Posterior vena cava (tissue), 2 donors: ENCODE measurements at regions of chr3 and their contacts with region 1.

Region 1: DNA sequence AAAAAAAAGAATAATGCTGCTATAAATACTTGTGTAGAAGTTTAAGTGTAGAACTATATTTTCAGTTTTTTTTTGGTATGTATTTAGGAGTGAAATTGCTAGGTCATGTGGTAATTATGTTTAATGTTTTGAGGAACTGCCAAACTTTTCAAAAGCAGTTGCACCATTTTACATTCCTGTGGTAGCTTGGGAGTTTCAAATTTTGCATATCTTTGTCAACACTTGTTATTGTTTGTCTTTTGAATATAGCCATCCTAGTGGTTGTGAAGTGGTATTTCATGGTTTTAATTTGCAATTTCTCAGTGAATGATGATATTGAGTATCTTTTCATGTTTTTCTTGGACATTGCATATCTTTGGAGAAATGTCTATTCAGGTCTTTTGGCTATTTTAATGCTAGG is 30.4 kb downstream of the SKIL start:
- DNase-seq: no peak

Region 2: DNA sequence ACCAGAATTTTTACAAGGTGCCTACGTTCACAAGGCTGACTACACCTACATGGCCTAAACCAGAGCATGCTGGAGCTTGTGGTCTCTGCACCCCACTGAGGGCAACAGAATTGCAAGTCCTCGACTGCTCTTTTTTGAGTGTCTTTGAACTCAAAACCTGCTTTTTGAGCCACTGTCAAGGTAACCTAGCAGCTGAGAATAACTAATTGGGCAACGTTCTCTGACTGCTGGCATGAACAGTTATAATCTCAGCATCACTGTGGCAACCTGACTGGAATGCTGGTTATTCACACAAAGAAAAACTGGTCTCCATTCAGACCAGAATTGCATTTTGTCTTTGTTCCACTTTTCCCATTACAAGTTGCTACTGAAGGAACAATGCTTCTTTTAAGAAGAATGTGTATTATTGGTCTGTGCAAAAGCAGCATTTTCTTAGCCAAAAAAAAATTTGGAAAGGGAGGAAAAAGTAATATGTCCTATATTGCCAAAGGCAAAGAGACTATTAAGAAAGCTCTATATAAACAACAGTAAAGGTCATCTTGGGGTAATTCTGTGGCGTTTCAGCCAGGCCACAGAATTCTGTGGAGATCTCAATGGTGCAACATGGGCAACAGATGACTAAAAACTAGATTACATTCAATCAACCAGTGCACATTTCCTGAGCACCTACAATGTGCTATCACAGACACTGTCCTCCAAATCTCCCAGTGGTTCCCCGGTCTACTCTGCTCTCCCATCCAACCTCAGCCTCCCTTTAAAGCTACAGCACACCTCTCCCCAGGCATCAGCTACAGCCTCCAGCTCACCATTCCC is 995.5 kb after region 1 on chr3:
- intact Hi-C with region 1: loop called in 1 of 2 experiments (anchors 5 kb)
- DNase-seq: no peak